Activated CD4-positive, alpha-beta memory T cell treated with anti-CD3 and anti-CD28 coated beads for 36 hours (primary cell): ENCODE measurements at regions of chr14 and their contacts with region 1.

Region 1: DNA sequence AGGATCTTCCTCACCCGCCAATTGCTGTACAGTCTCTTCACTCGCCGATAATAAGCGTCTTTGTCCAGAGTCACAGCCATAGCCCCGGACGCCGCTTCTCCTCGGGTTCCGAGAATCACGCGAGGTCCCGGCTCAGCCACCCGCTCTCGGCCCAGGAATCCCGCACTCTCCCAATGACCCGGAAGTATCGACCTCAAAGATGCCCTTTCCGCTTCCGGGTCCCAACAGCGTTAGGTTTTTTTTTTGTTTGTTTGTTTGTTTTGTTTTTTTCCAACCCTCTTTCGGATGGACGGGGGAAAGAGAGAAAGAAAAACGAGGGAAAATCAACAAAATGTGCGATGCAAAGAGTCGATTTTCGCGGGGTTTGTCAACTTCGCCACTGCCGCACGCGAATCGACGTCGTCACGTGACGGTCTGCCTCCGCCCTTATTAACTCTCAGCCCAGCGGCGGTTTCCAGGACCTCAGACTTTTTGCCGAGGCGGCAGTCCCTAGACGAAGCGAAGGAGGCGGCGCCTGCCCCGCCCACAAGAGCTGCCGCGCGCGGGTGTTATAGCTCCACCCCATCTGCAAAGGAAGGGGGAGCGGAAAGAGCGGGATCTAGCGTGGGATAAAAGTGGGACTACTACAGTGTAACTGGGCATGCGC is at the start of gene SUPT16H:
- DNase-seq: peak; percentile 97
- H3K4me3 Mint-ChIP-seq: peak within 1 kb of the TSS; percentile 95
- H3K27ac Mint-ChIP-seq: peak within 1 kb of the TSS; percentile 98
- H3K4me1 Mint-ChIP-seq: peaks cover 36% of the 10 kb centered on the region
- H3K27me3 Mint-ChIP-seq: no peaks in the 10 kb centered on the region
- total RNA-seq, gene SUPT16H: 156 to 158 TPM

Region 2: GRCh38 chr14:21103710-21104447 is 280.1 kb before region 1 on chr14:
- CTCF ChIA-PET with region 1: no interaction called
- POLR2A ChIA-PET with region 1: no interaction called
- intact Hi-C with region 1: loop called (anchors 1 kb)
- DNase-seq: peak; percentile 96
- H3K4me3 Mint-ChIP-seq: peak overlapping the region; percentile 85
- H3K27ac Mint-ChIP-seq: peak overlapping the region; percentile 76
- H3K4me1 Mint-ChIP-seq: peaks cover 41% of the 10 kb centered on the region
- H3K27me3 Mint-ChIP-seq: no peaks in the 10 kb centered on the region

Region 3: GRCh38 chr14:21233457-21234076 is 150.4 kb before region 1 on chr14:
- CTCF ChIA-PET with region 1: no interaction called
- POLR2A ChIA-PET with region 1: no interaction called
- intact Hi-C with region 1: loop called (anchors 5 kb)
- DNase-seq: peak; percentile 33
- H3K4me3 Mint-ChIP-seq: peak overlapping the region; percentile 46
- H3K27ac Mint-ChIP-seq: peak overlapping the region; percentile 79
- H3K4me1 Mint-ChIP-seq: peaks cover 89% of the 10 kb centered on the region
- H3K27me3 Mint-ChIP-seq: no peaks in the 10 kb centered on the region

Region 4: DNA sequence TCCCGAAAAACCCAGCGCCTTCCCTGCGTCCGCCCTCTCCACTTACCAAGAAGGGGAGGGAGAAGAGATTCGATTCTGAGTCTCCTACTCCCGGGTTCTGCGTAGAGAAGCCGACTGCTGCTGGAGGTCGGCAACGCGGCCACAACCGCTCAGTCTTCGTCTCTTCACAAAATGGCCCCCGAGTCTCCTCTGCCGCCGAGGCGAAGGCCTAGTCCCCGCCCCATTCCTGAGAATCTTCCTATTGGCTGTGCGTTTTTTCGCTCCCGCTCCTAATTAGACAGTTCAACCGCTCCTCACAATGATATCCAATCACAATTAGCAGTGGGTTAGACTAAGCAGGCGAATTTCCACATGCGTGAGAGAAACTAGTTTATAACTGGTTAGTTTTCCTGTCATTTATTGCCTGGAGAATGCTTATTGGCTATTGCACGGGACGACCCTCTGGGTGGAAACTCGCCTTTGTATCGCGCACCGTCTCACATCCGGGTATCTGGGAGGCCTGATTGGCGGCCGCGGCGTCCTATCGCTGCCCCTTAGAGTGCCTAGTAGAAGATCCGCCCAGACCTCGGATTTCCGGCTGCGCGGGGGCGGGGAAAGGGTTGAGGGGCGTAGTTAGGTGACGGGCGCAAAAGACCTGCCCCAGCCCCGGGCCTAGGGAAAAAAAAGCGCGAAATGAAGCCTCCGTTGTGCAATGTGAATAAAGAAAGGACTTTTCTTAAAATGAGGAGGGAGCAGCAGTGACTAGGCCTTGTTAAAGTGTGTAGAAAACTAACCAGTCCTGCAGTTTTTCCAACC is 114.5 kb before region 1 on chr14 and contains the start of gene HNRNPC:
- CTCF ChIA-PET with region 1: interaction called, 3 read pairs
- POLR2A ChIA-PET with region 1: interaction called, 12 read pairs
- intact Hi-C with region 1: loop called (anchors 1 kb)
- DNase-seq: peak; percentile 100
- H3K4me3 Mint-ChIP-seq: peak within 1 kb of the TSS; percentile 100
- H3K27ac Mint-ChIP-seq: peak within 1 kb of the TSS; percentile 100
- H3K4me1 Mint-ChIP-seq: peaks cover 24% of the 10 kb centered on the region
- H3K27me3 Mint-ChIP-seq: no peaks in the 10 kb centered on the region
- total RNA-seq, gene HNRNPC: 1,063 to 1,070 TPM

Region 5: GRCh38 chr14:21346549-21347135 is 37.3 kb before region 1 on chr14:
- CTCF ChIA-PET with region 1: no interaction called
- POLR2A ChIA-PET with region 1: no interaction called
- intact Hi-C with region 1: no loop called
- DNase-seq: no peak
- H3K4me3 Mint-ChIP-seq: no peak overlapping the region
- H3K27ac Mint-ChIP-seq: no peak overlapping the region
- H3K4me1 Mint-ChIP-seq: peaks cover 4% of the 10 kb centered on the region
- H3K27me3 Mint-ChIP-seq: no peaks in the 10 kb centered on the region

Region 6: GRCh38 chr14:21414137-21414631 is 30.2 kb after region 1 on chr14:
- CTCF ChIA-PET with region 1: no interaction called
- POLR2A ChIA-PET with region 1: no interaction called
- intact Hi-C with region 1: loop called (anchors 1 kb)
- DNase-seq: no peak
- H3K4me3 Mint-ChIP-seq: no peak overlapping the region
- H3K27ac Mint-ChIP-seq: peak overlapping the region; percentile 89
- H3K4me1 Mint-ChIP-seq: peaks cover 30% of the 10 kb centered on the region
- H3K27me3 Mint-ChIP-seq: no peaks in the 10 kb centered on the region

Region 7: DNA sequence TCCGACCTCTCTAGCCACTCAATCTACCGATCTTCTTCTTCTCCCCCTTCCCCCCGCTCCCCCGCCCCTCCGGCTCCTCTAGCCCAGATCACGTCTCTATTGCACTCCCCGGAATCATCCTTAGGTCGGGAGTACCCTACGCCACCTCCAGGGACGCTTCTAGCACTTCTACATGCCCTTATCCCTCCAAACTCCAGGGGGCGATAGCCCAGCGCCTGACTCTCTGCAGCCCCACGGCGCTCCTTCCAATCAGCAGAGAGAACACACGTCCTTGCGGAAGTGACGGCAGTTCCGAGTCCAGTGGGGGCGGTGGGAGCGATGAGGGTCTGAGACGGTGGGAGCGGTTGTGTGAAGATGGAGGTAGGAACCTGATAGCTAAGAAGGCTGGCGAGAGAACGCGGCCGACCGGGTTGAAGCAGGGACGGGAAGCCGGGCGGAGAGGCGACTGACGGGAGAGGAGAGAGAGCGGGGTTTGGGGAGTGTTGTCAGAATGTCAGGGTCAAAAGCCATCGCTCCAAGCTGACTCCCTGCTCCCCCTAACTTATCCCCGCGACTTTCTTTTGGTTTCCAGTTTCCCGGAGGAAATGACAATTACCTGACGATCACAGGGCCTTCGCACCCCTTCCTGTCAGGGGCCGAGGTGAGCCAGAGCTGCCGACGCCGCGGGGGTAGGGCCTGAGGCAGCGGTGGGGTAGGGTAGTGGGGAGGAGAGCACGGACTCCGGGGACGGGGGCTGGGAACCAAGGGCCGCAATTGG is 93.1 kb after region 1 on chr14 and contains the starts of genes RAB2B and TOX4:
- CTCF ChIA-PET with region 1: interaction called, 6 read pairs
- POLR2A ChIA-PET with region 1: no interaction called
- intact Hi-C with region 1: loop called (anchors 1 kb)
- DNase-seq: peak; percentile 97
- H3K4me3 Mint-ChIP-seq: peak within 1 kb of the TSS; percentile 99
- H3K27ac Mint-ChIP-seq: peak within 1 kb of the TSS; percentile 95
- H3K4me1 Mint-ChIP-seq: peaks cover 31% of the 10 kb centered on the region
- H3K27me3 Mint-ChIP-seq: no peaks in the 10 kb centered on the region
- total RNA-seq, gene RAB2B: 21.2 to 23.6 TPM
- total RNA-seq, gene TOX4: 66.1 to 67.5 TPM